ENCODE measurements at regions of chr10 and their contacts with region 1.

Region 1: GRCh38 chr10:12710594-12711349 is 290.7 kb downstream of the CCDC3 start:
- DNase-seq: no peak
- H3K4me3 ChIP-seq: no peak overlapping the region
- H3K27ac ChIP-seq: peak overlapping the region; percentile 80
- H3K4me1 ChIP-seq: peaks cover 49% of the 10 kb centered on the region
- H3K27me3 ChIP-seq: no peaks in the 10 kb centered on the region
- CTCF ChIP-seq: peak; percentile 51 to 91 (median 91)
- POLR2A ChIP-seq: no peak

Region 2: GRCh38 chr10:12165999-12166775 is 544.6 kb before region 1 on chr10:
- intact Hi-C with region 1: no loop called
- DNase-seq: no peak
- H3K4me3 ChIP-seq: no peak overlapping the region
- H3K27ac ChIP-seq: no peak overlapping the region
- H3K4me1 ChIP-seq: no peaks in the 10 kb centered on the region
- H3K27me3 ChIP-seq: no peaks in the 10 kb centered on the region
- CTCF ChIP-seq: no peak
- POLR2A ChIP-seq: no peak

Region 3: DNA sequence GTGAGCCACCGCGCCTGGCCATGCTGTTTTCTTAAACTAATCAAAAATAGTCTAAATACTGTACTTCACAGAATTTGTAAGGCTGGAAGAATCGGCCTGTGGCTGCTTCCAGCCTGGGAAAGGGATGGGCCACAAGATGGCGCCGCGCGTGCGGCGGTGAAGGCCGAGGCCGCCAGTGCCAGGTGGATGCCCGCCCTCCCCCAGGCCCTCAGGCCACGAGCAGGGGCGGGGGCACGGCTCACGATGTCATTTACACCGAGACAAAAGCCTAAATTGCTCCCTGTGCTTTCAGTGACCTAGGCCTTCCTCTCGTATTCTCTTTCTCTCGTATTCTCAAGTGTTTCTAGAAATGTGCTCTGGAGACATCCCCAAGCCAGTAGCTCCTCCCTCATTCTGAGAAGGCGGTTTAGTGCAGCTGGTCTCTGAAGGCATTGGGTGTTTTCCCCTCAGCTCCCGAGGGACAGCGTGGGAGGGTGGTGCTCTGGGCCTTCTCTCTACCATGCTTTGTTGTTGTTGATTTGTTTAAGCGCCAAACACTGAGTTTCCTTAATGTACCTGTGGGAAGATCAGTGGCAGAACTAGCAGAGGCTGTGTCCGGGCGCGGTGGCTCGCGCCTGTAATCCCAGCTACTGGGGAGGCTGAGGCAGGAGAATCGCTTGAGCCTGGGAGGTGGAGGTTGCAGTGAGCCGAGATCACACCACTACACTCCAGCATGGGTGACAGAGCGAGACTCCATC is 446.4 kb before region 1 on chr10:
- intact Hi-C with region 1: loop called (anchors 10 kb)
- DNase-seq: no peak
- H3K4me3 ChIP-seq: peak overlapping the region; percentile 30 to 50
- H3K27ac ChIP-seq: peak overlapping the region; percentile 21
- H3K4me1 ChIP-seq: no peaks in the 10 kb centered on the region
- H3K27me3 ChIP-seq: no peaks in the 10 kb centered on the region
- CTCF ChIP-seq: peak; percentile 33 to 95 (median 88)
- POLR2A ChIP-seq: no peak

Region 4: GRCh38 chr10:12482587-12482986 is 228.2 kb before region 1 on chr10:
- intact Hi-C with region 1: no loop called
- DNase-seq: no peak
- H3K4me3 ChIP-seq: no peak overlapping the region
- H3K27ac ChIP-seq: no peak overlapping the region
- H3K4me1 ChIP-seq: no peaks in the 10 kb centered on the region
- H3K27me3 ChIP-seq: no peaks in the 10 kb centered on the region
- CTCF ChIP-seq: no peak
- POLR2A ChIP-seq: no peak

Region 5: DNA sequence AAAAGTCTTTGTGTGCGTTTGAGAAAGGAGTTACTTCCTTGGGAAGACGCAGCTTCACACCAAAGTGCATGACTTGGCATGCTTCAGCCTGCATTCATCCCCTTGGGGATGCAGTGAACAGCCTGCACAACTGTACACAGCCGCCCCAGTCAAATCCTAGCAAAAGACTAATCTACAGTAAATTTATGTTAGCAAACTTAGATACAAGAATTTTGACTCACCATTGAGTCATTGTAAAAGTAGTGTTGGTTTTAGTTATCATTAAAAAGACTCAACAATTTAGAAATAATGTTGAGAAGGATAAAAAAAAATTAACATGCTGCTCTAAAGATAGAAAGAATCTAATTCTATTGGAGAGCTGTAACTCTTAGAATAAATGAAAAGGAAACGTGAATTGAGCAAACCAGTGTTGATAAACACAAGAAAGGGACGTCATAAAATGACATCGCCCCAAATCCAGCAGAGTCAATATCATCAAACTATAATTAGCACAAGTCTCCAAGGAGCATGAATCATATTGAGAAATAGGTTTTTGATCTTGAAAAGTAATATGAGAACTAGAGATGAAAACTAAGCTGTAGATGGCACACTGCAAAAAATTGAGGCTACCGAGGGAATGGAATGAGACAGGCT is 377.3 kb after region 1 on chr10:
- intact Hi-C with region 1: loop called (anchors 10 kb)
- DNase-seq: no peak
- H3K4me3 ChIP-seq: no peak overlapping the region
- H3K27ac ChIP-seq: no peak overlapping the region
- H3K4me1 ChIP-seq: peaks cover 7% of the 10 kb centered on the region
- H3K27me3 ChIP-seq: no peaks in the 10 kb centered on the region
- CTCF ChIP-seq: no peak
- POLR2A ChIP-seq: no peak